T-cell (primary cell): ENCODE measurements at regions of chr12 and their contacts with region 1.

Region 1: DNA sequence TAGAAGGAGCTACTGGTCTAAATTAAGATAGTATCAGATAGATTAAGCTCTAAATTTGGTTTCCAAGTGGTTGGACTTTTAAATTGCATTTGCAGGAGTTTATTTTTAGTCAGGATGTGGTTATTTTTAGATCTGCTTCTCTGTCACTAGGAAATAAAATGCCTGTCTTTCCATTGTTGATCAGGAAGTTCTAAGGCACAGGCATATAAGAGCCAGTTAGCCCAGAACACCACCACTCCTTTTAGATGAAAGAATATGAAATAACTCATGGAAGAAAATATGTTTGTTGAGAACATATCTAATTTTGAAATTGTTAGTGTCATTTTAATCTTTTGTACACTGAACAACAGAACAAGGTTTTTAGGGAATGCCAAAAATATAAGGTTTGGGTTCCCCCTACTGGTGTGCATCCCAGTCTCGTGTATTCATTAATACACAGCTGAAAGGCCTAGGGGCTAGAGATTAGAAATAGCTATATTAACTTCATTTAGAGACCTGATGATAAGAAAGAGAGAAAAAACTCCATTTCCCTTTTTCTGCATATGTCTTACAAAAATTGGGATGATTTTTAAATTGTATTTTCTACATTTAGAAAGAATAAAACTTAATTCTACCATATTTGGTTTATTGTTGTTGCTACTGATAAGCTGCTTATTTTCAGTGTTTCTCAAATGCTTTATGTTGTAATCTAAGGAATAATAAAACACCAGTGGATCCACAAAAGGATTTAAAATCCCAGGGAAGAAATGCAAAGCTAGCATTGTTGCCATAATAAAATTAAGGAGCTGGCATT is 67.2 kb downstream of the RIC8B start:
- DNase-seq: peak in 28 of 35 experiments; percentile 0 to 61 (median 22)
- ATAC-seq: peak in 3 of 4 experiments; percentile 45 to 59 (median 51)
- H3K4me3 ChIP-seq: no peak overlapping the region
- H3K4me3 Mint-ChIP-seq: no peak overlapping the region
- H3K27ac ChIP-seq: no peak overlapping the region
- H3K27ac Mint-ChIP-seq: peak overlapping the region in 1 of 2 donors; percentile 9
- H3K4me1 ChIP-seq: peaks cover 0 to 8% of the 10 kb centered on the region in 2 experiments
- H3K4me1 Mint-ChIP-seq: peaks cover 24 to 27% (median 25%) of the 10 kb centered on the region in 3 donors
- H3K27me3 ChIP-seq: no peaks in the 10 kb centered on the region
- H3K27me3 Mint-ChIP-seq: no peaks in the 10 kb centered on the region

Region 2: GRCh38 chr12:106357549-106358395 is 483.9 kb before region 1 on chr12 and contains the start of gene POLR3B:
- CTCF ChIA-PET with region 1: interaction called, 5 to 27 read pairs
- POLR2A ChIA-PET with region 1: no interaction called
- DNase-seq: peak; percentile 92 to 98 (median 96)
- ATAC-seq: peak; percentile 91 to 93 (median 92)
- H3K4me3 ChIP-seq: peak within 1 kb of the TSS; percentile 80 to 89
- H3K4me3 Mint-ChIP-seq: peak within 1 kb of the TSS; percentile 89 to 94 (median 93)
- H3K27ac ChIP-seq: peak within 1 kb of the TSS; percentile 80
- H3K27ac Mint-ChIP-seq: peak within 1 kb of the TSS; percentile 92 to 96
- H3K4me1 ChIP-seq: peaks cover 10 to 13% of the 10 kb centered on the region in 2 experiments
- H3K4me1 Mint-ChIP-seq: peaks cover 17 to 18% (median 17%) of the 10 kb centered on the region in 3 donors
- H3K27me3 ChIP-seq: no peaks in the 10 kb centered on the region
- H3K27me3 Mint-ChIP-seq: no peaks in the 10 kb centered on the region
- total RNA-seq, gene POLR3B: 6.3 to 8.4 (median 7.0) TPM

Region 3: GRCh38 chr12:106386813-106387535 is 454.7 kb before region 1 on chr12:
- CTCF ChIA-PET with region 1: interaction called, 8 to 20 read pairs
- POLR2A ChIA-PET with region 1: no interaction called
- DNase-seq: no peak
- ATAC-seq: no peak
- H3K4me3 ChIP-seq: no peak overlapping the region
- H3K4me3 Mint-ChIP-seq: no peak overlapping the region
- H3K27ac ChIP-seq: no peak overlapping the region
- H3K27ac Mint-ChIP-seq: no peak overlapping the region
- H3K4me1 ChIP-seq: peaks cover 0 to 2% of the 10 kb centered on the region in 2 experiments
- H3K4me1 Mint-ChIP-seq: no peaks in the 10 kb centered on the region
- H3K27me3 ChIP-seq: no peaks in the 10 kb centered on the region
- H3K27me3 Mint-ChIP-seq: no peaks in the 10 kb centered on the region

Region 4: GRCh38 chr12:106436164-106436563 is 405.5 kb before region 1 on chr12:
- CTCF ChIA-PET with region 1: no interaction called
- POLR2A ChIA-PET with region 1: interaction called in 1 of 2 experiments, 15 read pairs
- DNase-seq: no peak
- ATAC-seq: no peak
- H3K4me3 ChIP-seq: no peak overlapping the region
- H3K4me3 Mint-ChIP-seq: no peak overlapping the region
- H3K27ac ChIP-seq: no peak overlapping the region
- H3K27ac Mint-ChIP-seq: no peak overlapping the region
- H3K4me1 ChIP-seq: no peaks in the 10 kb centered on the region
- H3K4me1 Mint-ChIP-seq: no peaks in the 10 kb centered on the region
- H3K27me3 ChIP-seq: no peaks in the 10 kb centered on the region
- H3K27me3 Mint-ChIP-seq: no peaks in the 10 kb centered on the region

Region 5: GRCh38 chr12:106736051-106736957 is 105.4 kb before region 1 on chr12:
- CTCF ChIA-PET with region 1: interaction called, 12 to 15 read pairs
- POLR2A ChIA-PET with region 1: no interaction called
- DNase-seq: peak in 12 of 35 experiments; percentile 5 to 59 (median 13)
- ATAC-seq: peak in 3 of 4 experiments; percentile 43 to 76 (median 59)
- H3K4me3 ChIP-seq: no peak overlapping the region
- H3K4me3 Mint-ChIP-seq: no peak overlapping the region
- H3K27ac ChIP-seq: no peak overlapping the region
- H3K27ac Mint-ChIP-seq: no peak overlapping the region
- H3K4me1 ChIP-seq: no peaks in the 10 kb centered on the region
- H3K4me1 Mint-ChIP-seq: peaks cover 5 to 17% (median 7%) of the 10 kb centered on the region in 3 donors
- H3K27me3 ChIP-seq: no peaks in the 10 kb centered on the region
- H3K27me3 Mint-ChIP-seq: peaks cover 0 to 2% of the 10 kb centered on the region in 2 donors

Region 6: GRCh38 chr12:106831699-106832098 is 10.0 kb before region 1 on chr12:
- CTCF ChIA-PET with region 1: interaction called, 4 to 6 read pairs
- POLR2A ChIA-PET with region 1: interaction called in 1 of 2 experiments, 10 read pairs
- DNase-seq: no peak
- ATAC-seq: no peak
- H3K4me3 ChIP-seq: no peak overlapping the region
- H3K4me3 Mint-ChIP-seq: no peak overlapping the region
- H3K27ac ChIP-seq: no peak overlapping the region
- H3K27ac Mint-ChIP-seq: no peak overlapping the region
- H3K4me1 ChIP-seq: no peaks in the 10 kb centered on the region
- H3K4me1 Mint-ChIP-seq: peaks cover 0 to 10% (median 0%) of the 10 kb centered on the region in 3 donors
- H3K27me3 ChIP-seq: no peaks in the 10 kb centered on the region
- H3K27me3 Mint-ChIP-seq: no peaks in the 10 kb centered on the region

Region 7: DNA sequence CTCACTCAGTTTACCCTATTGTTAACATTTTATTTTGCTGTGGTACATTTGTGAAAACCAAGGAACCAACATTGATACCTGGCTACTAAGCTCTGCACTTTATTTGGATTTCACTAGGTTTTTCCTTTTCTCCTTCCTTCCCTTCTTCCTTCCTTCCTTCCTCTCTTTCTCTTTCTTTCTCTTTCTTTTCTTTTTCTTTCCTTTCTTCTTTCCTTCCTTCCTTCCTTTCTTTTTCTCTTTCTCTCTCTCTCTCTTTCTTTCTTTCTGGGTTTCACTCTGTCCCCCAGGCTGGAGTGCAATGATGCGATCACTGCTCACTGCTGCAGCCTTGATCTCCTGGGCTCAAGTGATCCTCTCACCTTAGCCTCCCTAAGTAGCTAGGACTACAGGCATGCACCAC is 85.0 kb after region 1 on chr12:
- CTCF ChIA-PET with region 1: no interaction called
- POLR2A ChIA-PET with region 1: no interaction called
- DNase-seq: no peak
- ATAC-seq: no peak
- H3K4me3 ChIP-seq: no peak overlapping the region
- H3K4me3 Mint-ChIP-seq: no peak overlapping the region
- H3K27ac ChIP-seq: no peak overlapping the region
- H3K27ac Mint-ChIP-seq: no peak overlapping the region
- H3K4me1 ChIP-seq: no peaks in the 10 kb centered on the region
- H3K4me1 Mint-ChIP-seq: no peaks in the 10 kb centered on the region
- H3K27me3 ChIP-seq: peaks cover 3 to 4% of the 10 kb centered on the region in 2 experiments
- H3K27me3 Mint-ChIP-seq: peaks cover 22 to 29% of the 10 kb centered on the region in 2 donors

Region 8: GRCh38 chr12:107593713-107594381 is 752.1 kb after region 1 on chr12:
- CTCF ChIA-PET with region 1: no interaction called
- POLR2A ChIA-PET with region 1: no interaction called
- DNase-seq: no peak
- ATAC-seq: no peak
- H3K4me3 ChIP-seq: no peak overlapping the region
- H3K4me3 Mint-ChIP-seq: no peak overlapping the region
- H3K27ac ChIP-seq: no peak overlapping the region
- H3K27ac Mint-ChIP-seq: no peak overlapping the region
- H3K4me1 ChIP-seq: no peaks in the 10 kb centered on the region
- H3K4me1 Mint-ChIP-seq: peaks cover 0 to 5% (median 3%) of the 10 kb centered on the region in 3 donors
- H3K27me3 ChIP-seq: no peaks in the 10 kb centered on the region
- H3K27me3 Mint-ChIP-seq: no peaks in the 10 kb centered on the region